Dendritic cell treated with granulocyte-macrophage colony-stimulating factor and Interleukin-4, amounts not matched to agents 40 ng/mL and 50 ng/mL, for 4 days (primary cell): ENCODE measurements at regions of chr3 and their contacts with region 1.

Region 1: GRCh38 chr3:121989943-121990342 is 32.1 kb downstream of the ILDR1 start:
- H3K4me3 Mint-ChIP-seq: no peak overlapping the region
- H3K27ac Mint-ChIP-seq: peak overlapping the region; percentile 55
- H3K4me1 Mint-ChIP-seq: peaks cover 42% of the 10 kb centered on the region
- H3K27me3 Mint-ChIP-seq: no peaks in the 10 kb centered on the region

Region 2: DNA sequence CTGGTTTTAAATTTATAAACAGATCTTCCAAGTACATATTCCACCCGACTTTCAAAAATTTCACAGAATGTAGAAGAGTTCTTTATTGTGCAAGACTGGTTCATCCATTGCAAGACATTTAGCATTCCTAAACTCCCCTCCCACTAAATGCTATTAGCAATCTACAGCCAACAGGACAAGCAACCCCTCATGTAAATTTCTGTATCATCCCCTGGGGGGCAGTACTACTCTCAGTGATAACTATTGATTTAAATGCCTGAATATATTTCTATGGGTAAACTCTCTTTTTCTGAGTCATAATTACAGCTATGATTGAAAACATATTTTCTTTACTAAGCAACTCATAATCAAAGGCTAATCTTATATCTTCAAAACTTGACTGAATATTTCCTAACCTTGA is 106.4 kb before region 1 on chr3:
- intact Hi-C with region 1: loop called (anchors 10 kb)
- H3K4me3 Mint-ChIP-seq: no peak overlapping the region
- H3K27ac Mint-ChIP-seq: no peak overlapping the region
- H3K4me1 Mint-ChIP-seq: peaks cover 11% of the 10 kb centered on the region
- H3K27me3 Mint-ChIP-seq: no peaks in the 10 kb centered on the region

Region 3: GRCh38 chr3:122006267-122006666 is 16.3 kb after region 1 on chr3:
- intact Hi-C with region 1: loop called (anchors 2 kb)
- H3K4me3 Mint-ChIP-seq: no peak overlapping the region
- H3K27ac Mint-ChIP-seq: peak overlapping the region; percentile 89
- H3K4me1 Mint-ChIP-seq: peaks cover 60% of the 10 kb centered on the region
- H3K27me3 Mint-ChIP-seq: peaks cover 4% of the 10 kb centered on the region